Mammary epithelial cell (primary cell): ENCODE measurements at regions of chr6 and their contacts with region 1.

Region 1: GRCh38 chr6:48087448-48087847 is 23.5 kb downstream of the PTCHD4 start:
- DNase-seq: no peak
- H3K4me3 ChIP-seq: no peak overlapping the region
- H3K27ac ChIP-seq: no peak overlapping the region
- H3K4me1 ChIP-seq: no peaks in the 10 kb centered on the region
- H3K27me3 ChIP-seq: no peaks in the 10 kb centered on the region
- CTCF ChIP-seq: peak; percentile 44 to 48

Region 2: DNA sequence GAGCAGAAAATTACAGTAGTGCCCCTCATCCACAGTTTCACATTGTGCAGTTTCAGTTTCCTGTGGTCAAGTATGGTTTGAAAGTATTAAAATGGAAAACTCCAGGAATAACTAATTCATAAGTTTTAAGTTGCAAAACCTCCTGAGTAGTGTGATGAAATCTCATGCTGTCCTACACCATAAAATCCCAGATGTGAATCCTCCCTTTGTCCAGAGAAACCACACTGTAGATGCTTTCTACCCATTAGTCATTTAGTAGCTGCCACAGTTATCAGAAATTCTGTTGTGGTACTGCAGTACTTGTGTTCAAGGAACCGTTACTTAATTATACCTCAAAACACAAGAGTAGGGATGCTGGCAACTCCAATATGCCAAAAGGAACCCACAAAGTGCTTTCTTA is 51.1 kb before region 1 on chr6:
- CTCF ChIA-PET with region 1: no interaction called
- dilution Hi-C with region 1: no loop called
- in situ Hi-C with region 1: no loop called
- intact Hi-C with region 1: no loop called
- DNase-seq: peak; percentile 84
- H3K4me3 ChIP-seq: no peak overlapping the region
- H3K27ac ChIP-seq: peak overlapping the region; percentile 30
- H3K4me1 ChIP-seq: peaks cover 15% of the 10 kb centered on the region
- H3K27me3 ChIP-seq: no peaks in the 10 kb centered on the region
- CTCF ChIP-seq: no peak

Region 3: DNA sequence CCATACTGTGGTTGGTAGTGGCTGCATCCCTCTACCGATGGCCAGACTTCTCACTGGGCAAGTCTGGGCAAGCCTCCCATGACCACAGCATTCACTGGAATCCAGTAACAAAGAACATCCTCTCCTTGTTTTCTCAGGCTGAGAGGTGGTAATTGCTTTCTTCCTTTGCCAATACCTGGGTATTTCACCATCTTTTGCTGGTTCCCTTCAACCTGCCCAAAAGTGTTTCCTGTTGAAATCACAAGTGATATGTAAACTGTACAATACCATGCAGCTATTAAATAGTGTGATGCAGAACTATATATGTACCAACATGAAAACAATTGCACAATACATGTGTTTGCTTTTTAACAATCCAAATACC is 23.7 kb after region 1 on chr6 and contains the start of gene PTCHD4:
- CTCF ChIA-PET with region 1: no interaction called
- dilution Hi-C with region 1: no loop called
- in situ Hi-C with region 1: no loop called
- intact Hi-C with region 1: no loop called
- DNase-seq: peak; percentile 97
- H3K4me3 ChIP-seq: peak within 1 kb of the TSS; percentile 59 to 87 (median 74)
- H3K27ac ChIP-seq: peak within 1 kb of the TSS; percentile 93
- H3K4me1 ChIP-seq: peaks cover 6% of the 10 kb centered on the region
- H3K27me3 ChIP-seq: no peaks in the 10 kb centered on the region
- CTCF ChIP-seq: no peak
- total RNA-seq, gene PTCHD4: 1.2 to 1.3 TPM

Region 4: DNA sequence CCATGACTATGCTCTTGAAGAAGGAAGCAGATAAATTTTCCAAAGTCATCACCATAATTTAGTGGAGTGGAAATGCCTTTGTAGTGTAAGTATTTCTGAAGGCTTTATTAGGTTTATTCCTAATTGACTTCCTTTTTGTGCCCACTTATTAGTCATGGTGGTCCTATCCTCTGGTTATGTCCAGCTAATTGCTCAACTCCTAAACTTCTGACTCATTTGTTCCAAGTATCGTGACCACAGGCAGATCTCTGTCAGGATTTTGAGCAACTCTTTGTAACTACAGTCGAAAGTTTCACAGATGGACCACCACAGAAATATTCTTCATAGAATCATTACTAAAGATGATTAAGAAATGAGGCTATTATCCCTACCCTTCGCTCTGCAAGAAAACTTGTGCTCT is 339.2 kb after region 1 on chr6:
- CTCF ChIA-PET with region 1: no interaction called
- dilution Hi-C with region 1: no loop called
- in situ Hi-C with region 1: loop called in 1 of 2 experiments (anchors 25 kb)
- intact Hi-C with region 1: no loop called
- DNase-seq: peak; percentile 72
- H3K4me3 ChIP-seq: no peak overlapping the region
- H3K27ac ChIP-seq: peak overlapping the region; percentile 54
- H3K4me1 ChIP-seq: peaks cover 44% of the 10 kb centered on the region
- H3K27me3 ChIP-seq: no peaks in the 10 kb centered on the region
- CTCF ChIP-seq: no peak

Region 5: GRCh38 chr6:48449002-48449401 is 361.6 kb after region 1 on chr6:
- CTCF ChIA-PET with region 1: interaction called, 3 read pairs
- dilution Hi-C with region 1: no loop called
- in situ Hi-C with region 1: loop called in 1 of 2 experiments (anchors 25 kb)
- intact Hi-C with region 1: loop called (anchors 1 kb)
- DNase-seq: peak; percentile 14
- H3K4me3 ChIP-seq: no peak overlapping the region
- H3K27ac ChIP-seq: no peak overlapping the region
- H3K4me1 ChIP-seq: no peaks in the 10 kb centered on the region
- H3K27me3 ChIP-seq: no peaks in the 10 kb centered on the region
- CTCF ChIP-seq: peak; percentile 14 to 49

Region 6: GRCh38 chr6:48476257-48476656 is 388.8 kb after region 1 on chr6:
- CTCF ChIA-PET with region 1: interaction called, 4 read pairs
- dilution Hi-C with region 1: no loop called
- in situ Hi-C with region 1: no loop called
- intact Hi-C with region 1: loop called (anchors 1 kb)
- DNase-seq: peak; percentile 40
- H3K4me3 ChIP-seq: no peak overlapping the region
- H3K27ac ChIP-seq: no peak overlapping the region
- H3K4me1 ChIP-seq: peaks cover 16% of the 10 kb centered on the region
- H3K27me3 ChIP-seq: no peaks in the 10 kb centered on the region
- CTCF ChIP-seq: peak; percentile 47 to 60